AG04450 (cell line): ENCODE measurements at regions of chr2 and their contacts with region 1.

Region 1: GRCh38 chr2:200247494-200247893 is 59.0 kb upstream of the SPATS2L start:
- DNase-seq: peak; percentile 76
- H3K4me3 ChIP-seq: no peak overlapping the region
- H3K27ac ChIP-seq: peak overlapping the region; percentile 68
- H3K27me3 ChIP-seq: no peaks in the 10 kb centered on the region
- CTCF ChIP-seq: no peak

Region 2: DNA sequence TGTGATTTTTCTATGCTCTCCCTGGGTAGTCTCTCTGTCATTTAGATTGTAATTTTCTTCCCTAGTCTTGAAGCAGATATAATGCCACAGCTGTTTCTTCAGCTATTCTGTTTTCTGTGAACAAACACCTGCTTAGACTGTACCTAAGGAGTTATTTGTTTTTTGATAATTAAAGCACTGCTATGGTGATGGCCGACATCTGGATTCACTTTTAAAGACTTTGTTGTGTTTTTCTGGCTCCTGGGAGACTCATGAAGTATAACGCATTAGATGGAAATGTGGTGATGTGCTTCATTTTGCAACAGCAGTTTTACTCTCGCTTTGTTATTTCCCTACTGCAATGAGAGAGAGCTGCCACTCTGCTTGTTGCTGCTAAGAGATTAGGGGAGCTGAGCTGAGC is 352.1 kb before region 1 on chr2:
- CTCF ChIA-PET with region 1: no interaction called
- POLR2A ChIA-PET with region 1: no interaction called
- DNase-seq: no peak
- H3K4me3 ChIP-seq: no peak overlapping the region
- H3K27ac ChIP-seq: no peak overlapping the region
- H3K27me3 ChIP-seq: no peaks in the 10 kb centered on the region
- CTCF ChIP-seq: no peak

Region 3: GRCh38 chr2:200226451-200227426 is 20.8 kb before region 1 on chr2:
- CTCF ChIA-PET with region 1: interaction called, 10 read pairs
- POLR2A ChIA-PET with region 1: no interaction called
- DNase-seq: no peak
- H3K4me3 ChIP-seq: no peak overlapping the region
- H3K27ac ChIP-seq: no peak overlapping the region
- H3K27me3 ChIP-seq: no peaks in the 10 kb centered on the region
- CTCF ChIP-seq: no peak

Region 4: GRCh38 chr2:200274116-200275075 is 26.9 kb after region 1 on chr2:
- CTCF ChIA-PET with region 1: no interaction called
- POLR2A ChIA-PET with region 1: no interaction called
- DNase-seq: no peak
- H3K4me3 ChIP-seq: no peak overlapping the region
- H3K27ac ChIP-seq: no peak overlapping the region
- H3K27me3 ChIP-seq: no peaks in the 10 kb centered on the region
- CTCF ChIP-seq: no peak